ENCODE measurements at regions of chr2 and their contacts with region 1.

Region 1: DNA sequence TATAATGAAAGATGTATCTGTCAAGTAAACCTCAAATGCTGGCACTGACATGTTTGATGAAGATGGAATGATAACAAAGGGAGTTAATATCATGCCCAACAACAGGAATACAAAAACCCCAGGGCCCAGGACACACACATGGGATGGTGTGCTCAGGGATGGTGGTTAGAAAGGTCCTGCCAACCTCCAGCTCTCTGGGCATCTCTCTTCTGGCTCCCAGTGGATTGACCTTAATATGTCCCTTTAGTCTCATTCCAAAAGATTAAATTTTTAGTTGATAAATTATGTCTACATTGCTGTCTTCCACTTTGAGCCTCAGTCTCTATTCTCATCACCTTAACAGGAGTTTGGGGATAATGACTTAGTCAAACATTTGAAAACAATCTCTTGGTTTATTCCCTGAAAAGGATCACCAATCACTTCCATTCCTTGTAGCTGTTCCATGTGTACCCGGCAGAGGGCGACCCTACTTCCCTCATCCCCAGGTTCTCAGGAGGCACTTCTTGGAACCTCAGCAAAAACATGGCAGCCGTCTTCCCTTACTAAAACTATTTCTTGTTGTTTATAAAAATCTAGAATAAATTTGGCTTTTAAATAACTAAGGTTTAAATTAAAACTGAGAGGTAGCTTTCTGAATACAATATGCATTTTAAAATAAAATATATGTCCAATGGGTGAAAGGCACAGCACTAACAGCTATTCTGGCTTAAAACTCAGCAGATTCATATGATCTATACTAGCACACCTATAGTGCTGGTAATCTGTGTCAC is 29.6 kb downstream of the MCEE start:
- DNase-seq: peak; percentile 30
- H3K4me3 ChIP-seq: no peak overlapping the region
- H3K27ac ChIP-seq: no peak overlapping the region
- H3K27me3 ChIP-seq: no peaks in the 10 kb centered on the region
- CTCF ChIP-seq: peak; percentile 82

Region 2: DNA sequence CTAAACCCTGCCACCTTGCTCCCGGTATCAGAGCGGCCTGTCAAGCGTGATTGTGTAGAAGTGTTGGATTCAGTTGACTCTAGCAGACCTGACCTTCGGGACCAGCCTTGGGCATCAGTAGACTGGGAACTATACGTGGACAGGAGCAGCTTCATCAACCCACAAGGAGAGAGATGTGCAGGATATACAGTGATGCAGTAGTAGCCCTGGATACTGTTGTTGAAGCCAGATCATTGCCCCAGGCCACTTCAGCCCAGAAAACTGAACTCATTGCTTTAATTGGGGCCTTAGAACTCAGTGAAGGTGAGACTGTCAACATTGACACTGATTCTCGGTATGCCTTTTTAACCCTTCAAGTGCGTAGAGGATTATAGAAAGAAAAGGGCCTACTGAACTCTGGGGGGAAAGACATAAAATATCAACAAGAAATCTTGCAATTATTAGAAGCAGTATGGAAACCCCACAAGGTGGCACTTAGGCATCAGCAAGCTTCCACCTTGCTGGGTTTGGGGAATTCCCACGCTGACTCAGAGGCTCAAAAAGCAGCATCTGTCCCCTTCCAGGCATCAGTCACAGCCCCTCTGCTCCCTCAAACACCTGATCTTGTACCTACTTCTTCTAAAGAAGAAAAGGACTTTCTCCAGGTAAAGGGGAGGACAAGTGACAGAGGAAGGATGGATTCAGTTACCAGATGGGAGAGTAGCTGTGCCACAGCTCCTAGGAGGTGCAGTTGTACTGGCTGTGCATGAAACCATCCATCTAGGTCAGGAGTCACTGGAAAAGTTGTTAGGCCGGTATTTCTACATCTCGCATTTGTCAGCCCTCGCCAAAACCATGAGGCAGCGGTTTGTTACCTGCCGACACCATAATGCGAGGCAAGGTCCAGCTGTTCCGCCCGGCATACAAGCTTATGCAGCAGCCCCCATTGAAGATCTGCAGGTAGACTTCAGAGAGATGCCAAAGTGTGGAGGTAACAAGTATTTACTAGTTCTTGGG is 50.7 kb before region 1 on chr2:
- CTCF ChIA-PET with region 1: no interaction called
- POLR2A ChIA-PET with region 1: no interaction called
- DNase-seq: no peak
- H3K4me3 ChIP-seq: no peak overlapping the region
- H3K27ac ChIP-seq: no peak overlapping the region
- H3K27me3 ChIP-seq: peaks cover 2% of the 10 kb centered on the region
- CTCF ChIP-seq: no peak

Region 3: DNA sequence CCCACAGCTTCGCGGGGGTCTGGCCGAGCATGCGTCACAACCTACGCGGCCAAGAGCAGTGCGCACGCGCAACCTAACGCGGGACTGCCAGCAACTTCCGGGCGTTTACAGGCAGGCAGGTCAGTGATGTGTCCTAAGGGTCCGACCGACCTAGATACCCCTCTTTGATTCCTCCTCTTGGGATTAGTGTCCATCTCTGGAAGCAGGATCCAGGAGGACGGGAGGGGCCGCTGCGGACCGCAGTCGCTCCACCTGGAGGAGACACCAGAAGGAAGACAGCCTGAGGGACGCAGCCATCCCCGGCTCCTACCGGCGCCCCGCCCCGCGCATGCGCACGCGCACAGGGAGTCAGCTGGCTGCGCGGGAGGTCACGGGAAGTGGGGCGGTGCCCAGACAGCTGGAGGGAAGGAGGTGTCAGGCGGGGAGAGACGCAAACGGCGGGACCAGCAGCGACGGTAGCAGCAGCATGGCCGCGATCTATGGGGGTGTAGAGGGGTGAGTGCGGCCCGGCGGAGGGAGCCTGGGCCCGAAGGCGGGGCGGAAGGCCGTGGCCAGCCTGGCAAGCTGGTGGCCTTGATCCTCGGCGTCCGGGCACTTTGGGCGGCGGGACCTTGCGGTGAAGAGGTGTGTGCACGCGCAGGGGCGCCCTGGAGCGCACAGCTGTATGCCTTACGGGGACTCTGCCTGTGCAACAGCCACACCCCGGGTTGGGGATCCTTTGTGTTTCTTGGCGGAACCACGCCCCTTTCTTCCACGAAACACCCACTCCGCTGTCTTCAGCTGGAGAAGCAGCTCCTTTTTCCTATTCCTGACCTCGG is 32.0 kb before region 1 on chr2 and contains the start of gene NAGK:
- CTCF ChIA-PET with region 1: interaction called, 12 read pairs
- POLR2A ChIA-PET with region 1: interaction called, 9 read pairs
- DNase-seq: peak; percentile 92
- H3K4me3 ChIP-seq: peak within 1 kb of the TSS; percentile 96
- H3K27ac ChIP-seq: peak within 1 kb of the TSS; percentile 97
- H3K27me3 ChIP-seq: no peaks in the 10 kb centered on the region
- CTCF ChIP-seq: no peak
- polyA plus RNA-seq, gene NAGK: 96.1 and 103 TPM in 2 replicates

Region 4: GRCh38 chr2:71113843-71114242 is 13.5 kb after region 1 on chr2:
- CTCF ChIA-PET with region 1: interaction called, 41 read pairs
- POLR2A ChIA-PET with region 1: no interaction called
- DNase-seq: no peak
- H3K4me3 ChIP-seq: no peak overlapping the region
- H3K27ac ChIP-seq: no peak overlapping the region
- H3K27me3 ChIP-seq: no peaks in the 10 kb centered on the region
- CTCF ChIP-seq: no peak

Region 5: DNA sequence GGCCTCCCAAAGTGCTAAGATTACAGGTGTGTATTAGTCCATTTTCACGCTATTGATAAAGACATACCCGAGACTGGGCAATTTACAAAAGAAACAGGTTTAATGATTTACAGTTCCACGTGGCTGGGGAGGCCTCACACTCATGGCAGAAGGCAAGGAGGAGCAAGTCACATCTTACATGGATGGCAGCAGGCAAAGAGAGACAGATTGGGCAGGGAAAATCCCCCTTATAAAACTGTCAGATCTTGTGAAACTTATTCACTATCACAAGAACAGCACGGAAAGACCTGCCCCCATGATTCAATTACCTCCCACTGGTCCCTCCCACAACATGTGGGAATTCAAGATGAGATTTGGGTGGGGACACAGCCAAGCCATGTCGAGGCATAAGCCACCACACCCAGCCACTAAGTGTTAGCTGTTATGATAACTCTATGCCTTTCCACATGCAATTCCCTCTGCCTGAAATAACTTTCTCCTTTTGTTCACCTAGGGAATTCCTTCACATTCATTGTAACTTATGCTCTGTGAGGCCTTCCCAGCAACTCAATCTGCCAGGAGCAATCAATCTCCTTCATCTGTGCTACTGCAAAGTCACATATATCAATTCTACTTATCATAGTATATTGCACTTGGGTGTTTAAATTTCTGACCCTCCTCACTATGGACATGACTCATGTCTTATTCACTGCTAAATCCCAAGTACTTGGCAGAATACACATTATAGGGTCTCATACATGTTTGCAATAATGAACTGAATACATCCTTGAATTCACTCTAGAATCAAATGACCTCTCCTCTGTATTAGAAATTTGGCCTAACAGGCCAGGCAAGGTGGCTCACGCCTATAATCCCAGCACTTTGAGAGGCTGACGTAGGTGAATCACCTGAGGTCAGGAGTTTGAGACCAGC is 22.3 kb after region 1 on chr2:
- CTCF ChIA-PET with region 1: interaction called, 17 read pairs
- POLR2A ChIA-PET with region 1: no interaction called
- DNase-seq: no peak
- H3K4me3 ChIP-seq: no peak overlapping the region
- H3K27ac ChIP-seq: no peak overlapping the region
- H3K27me3 ChIP-seq: no peaks in the 10 kb centered on the region
- CTCF ChIP-seq: no peak

Region 6: GRCh38 chr2:71130113-71130904 is 29.9 kb after region 1 on chr2 and contains the starts of genes MCEE and MPHOSPH10:
- CTCF ChIA-PET with region 1: interaction called, 11 read pairs
- POLR2A ChIA-PET with region 1: interaction called, 4 read pairs
- DNase-seq: peak; percentile 77
- H3K4me3 ChIP-seq: peak within 1 kb of the TSS; percentile 98
- H3K27ac ChIP-seq: peak within 1 kb of the TSS; percentile 97
- H3K27me3 ChIP-seq: no peaks in the 10 kb centered on the region
- CTCF ChIP-seq: no peak
- polyA plus RNA-seq, gene MCEE: 14.6 and 18.1 TPM in 2 replicates
- polyA plus RNA-seq, gene MPHOSPH10: 14.1 and 23.3 TPM in 2 replicates

Region 7: DNA sequence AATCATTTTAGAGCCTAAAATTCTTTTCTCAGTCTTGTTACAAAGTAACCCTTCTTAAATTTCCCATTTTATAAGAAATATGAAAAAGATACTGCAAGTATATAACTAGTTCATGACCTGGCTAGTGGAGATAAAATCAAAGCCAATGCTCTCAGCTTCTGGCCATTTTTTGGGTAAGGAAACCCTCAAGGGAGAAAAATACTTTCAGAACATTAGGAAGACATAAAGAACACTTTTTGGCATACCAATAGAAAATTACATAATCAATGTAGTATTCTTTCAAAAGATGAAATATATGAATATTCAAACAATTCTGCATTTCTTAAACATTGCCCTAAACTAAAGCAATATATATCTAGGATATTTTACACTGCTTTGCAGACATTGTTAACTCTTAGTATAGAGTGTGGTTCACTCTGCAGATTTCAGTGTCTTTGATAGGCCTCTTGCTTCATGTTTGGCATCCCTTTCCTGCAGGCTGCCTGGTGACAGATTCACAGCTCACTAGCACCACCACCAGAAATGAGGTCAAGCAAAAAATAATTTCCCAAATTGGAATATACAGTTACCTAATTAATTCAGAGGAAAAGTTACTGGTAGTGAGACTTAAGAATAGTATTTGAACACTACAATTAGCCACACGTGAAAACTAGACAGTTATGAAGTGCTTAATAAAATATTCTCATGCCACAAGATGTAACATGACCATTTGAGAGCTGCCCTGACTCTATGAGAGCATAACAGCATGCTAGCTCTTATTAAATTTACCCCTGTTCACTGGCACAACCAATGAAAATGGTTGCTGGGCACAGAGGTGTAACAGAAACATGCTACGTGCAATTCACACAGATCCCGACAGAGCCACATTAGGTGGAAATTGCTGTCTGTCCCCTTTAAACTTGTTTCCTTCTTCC is 90.5 kb after region 1 on chr2:
- CTCF ChIA-PET with region 1: interaction called, 20 read pairs
- POLR2A ChIA-PET with region 1: no interaction called
- DNase-seq: no peak
- H3K4me3 ChIP-seq: no peak overlapping the region
- H3K27ac ChIP-seq: no peak overlapping the region
- H3K27me3 ChIP-seq: peaks cover 7% of the 10 kb centered on the region
- CTCF ChIP-seq: peak; percentile 37